Activated B cell treated with CpG ODN at 0.5 μM for 24 hours (primary cell): ENCODE measurements at regions of chr3 and their contacts with region 1.

Region 1: DNA sequence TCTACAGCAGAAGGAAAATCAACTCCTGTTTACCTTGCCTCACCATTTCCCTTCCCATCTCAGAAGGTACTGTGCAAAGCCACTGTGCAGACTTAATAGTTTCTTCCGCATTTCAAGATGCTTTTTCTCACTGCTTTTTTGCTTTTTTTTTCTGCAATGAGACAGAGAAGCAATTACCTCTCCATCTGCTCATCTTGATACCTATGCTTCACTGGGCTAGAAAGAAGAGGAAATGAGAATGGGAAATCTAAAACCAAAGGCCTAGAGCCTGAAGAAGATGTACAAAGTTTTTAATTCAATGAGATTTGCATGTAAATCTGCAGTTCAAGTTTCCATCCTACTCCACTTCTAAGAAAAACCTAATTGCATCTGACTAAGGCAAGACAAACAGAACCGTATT is 238.1 kb upstream of the SETMAR start:
- DNase-seq: no peak
- ATAC-seq: peak; percentile 89
- H3K4me3 Mint-ChIP-seq: peak overlapping the region; percentile 33
- H3K27ac Mint-ChIP-seq: peak overlapping the region; percentile 72
- H3K4me1 Mint-ChIP-seq: peaks cover 95% of the 10 kb centered on the region
- H3K27me3 Mint-ChIP-seq: no peaks in the 10 kb centered on the region
- CTCF ChIP-seq: no peak

Region 2: GRCh38 chr3:3799173-3800079 is 265.7 kb before region 1 on chr3 and contains the start of gene LRRN1:
- CTCF ChIA-PET with region 1: no interaction called
- POLR2A ChIA-PET with region 1: no interaction called
- intact Hi-C with region 1: loop called (anchors 5 kb)
- DNase-seq: peak; percentile 32
- ATAC-seq: peak; percentile 72
- H3K4me3 Mint-ChIP-seq: peak within 1 kb of the TSS; percentile 82
- H3K27ac Mint-ChIP-seq: no peak within 1 kb of the TSS
- H3K4me1 Mint-ChIP-seq: peaks cover 23% of the 10 kb centered on the region
- H3K27me3 Mint-ChIP-seq: peaks cover 43% of the 10 kb centered on the region
- CTCF ChIP-seq: no peak
- total RNA-seq, gene LRRN1: 0.81 and 1.00 TPM in 2 replicates

Region 3: DNA sequence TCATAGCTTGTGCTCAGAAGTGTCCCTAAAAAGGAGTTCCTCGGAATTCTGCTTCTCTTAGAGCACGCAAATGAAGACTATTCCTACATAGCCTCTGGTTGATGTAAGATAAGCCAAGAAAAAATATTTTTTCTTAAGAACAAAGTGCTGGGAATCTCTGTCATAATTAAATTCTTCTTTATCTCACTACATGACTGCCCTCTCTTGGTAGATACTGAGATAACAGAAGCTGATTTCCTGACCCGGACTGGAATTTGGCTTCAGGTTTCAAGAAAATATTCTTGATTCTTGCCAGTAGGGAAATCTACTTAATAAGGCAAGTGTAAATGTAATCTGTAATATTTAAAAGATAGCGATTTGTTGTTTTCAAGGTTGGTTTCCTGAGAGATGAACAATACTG is 206.7 kb after region 1 on chr3:
- CTCF ChIA-PET with region 1: no interaction called
- POLR2A ChIA-PET with region 1: no interaction called
- intact Hi-C with region 1: loop called (anchors 10 kb)
- DNase-seq: no peak
- ATAC-seq: peak; percentile 49
- H3K4me3 Mint-ChIP-seq: no peak overlapping the region
- H3K27ac Mint-ChIP-seq: no peak overlapping the region
- H3K4me1 Mint-ChIP-seq: peaks cover 26% of the 10 kb centered on the region
- H3K27me3 Mint-ChIP-seq: no peaks in the 10 kb centered on the region
- CTCF ChIP-seq: no peak